ENCODE measurements at regions of chr2 and their contacts with region 1.

Region 1: GRCh38 chr2:45778720-45779171 is 127.3 kb downstream of the PRKCE start:
- DNase-seq: peak; percentile 63
- ATAC-seq: peak; percentile 72
- H3K4me3 ChIP-seq: no peak overlapping the region
- H3K27ac ChIP-seq: no peak overlapping the region
- H3K4me1 ChIP-seq: no peaks in the 10 kb centered on the region; the same call in 1 of the 2 replicates
- H3K27me3 ChIP-seq: no peaks in the 10 kb centered on the region
- CTCF ChIP-seq: peak; percentile 62
- POLR2A ChIP-seq: no peak
- RAD21 ChIP-seq: peak; percentile 78

Region 2: DNA sequence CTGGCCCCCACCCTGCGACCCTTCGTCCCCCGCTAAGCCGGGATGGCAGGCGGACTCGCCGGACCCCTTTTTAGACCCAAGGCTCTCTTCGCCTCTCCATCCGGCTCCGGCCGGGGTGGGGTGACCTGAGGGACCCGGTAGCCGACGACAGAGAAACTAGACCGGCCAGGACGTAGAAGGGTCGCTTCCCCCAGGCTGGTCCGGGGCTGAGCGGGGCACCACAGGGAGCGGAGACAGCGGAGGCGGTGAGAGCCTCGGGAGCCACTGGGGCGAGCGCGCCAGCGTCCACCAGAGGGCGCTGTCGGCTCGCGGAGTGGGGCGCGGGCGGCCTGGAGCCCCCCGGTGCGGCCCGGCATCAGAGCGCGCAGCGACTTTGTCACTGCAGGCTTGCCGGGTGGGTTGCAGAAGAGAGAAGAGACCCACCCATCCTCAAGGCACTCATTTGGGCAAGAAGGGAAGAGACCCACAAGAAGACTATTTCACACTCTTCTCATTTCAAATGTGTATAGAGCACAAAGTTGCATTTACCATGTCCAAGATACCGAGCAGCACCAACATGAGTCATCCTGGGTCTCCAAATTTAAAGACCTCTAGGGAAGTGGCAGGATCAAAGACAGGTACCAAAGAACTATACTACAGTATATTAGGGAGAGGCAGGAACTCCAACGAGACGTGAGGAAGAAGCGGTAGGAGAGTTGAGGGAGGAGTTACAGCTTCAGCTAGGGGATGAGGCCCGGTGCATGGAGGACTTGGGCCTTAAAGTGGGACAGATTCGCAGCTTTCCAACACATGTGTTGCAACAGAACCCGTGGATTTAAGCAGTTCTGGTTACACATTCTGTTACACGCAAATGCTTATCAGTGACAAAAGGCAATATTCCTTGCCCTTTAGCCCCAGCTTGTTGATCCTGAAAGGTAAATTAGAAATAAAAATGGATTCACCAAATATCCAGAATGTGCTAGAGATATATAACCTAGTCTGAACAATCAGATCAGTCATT is 134.9 kb before region 1 on chr2:
- CTCF ChIA-PET with region 1: no interaction called
- POLR2A ChIA-PET with region 1: no interaction called
- dilution Hi-C with region 1: no loop called
- in situ Hi-C with region 1: loop called (anchors 5 kb)
- intact Hi-C with region 1: loop called (anchors 1 kb)
- DNase-seq: peak; percentile 31
- ATAC-seq: peak; percentile 99
- H3K4me3 ChIP-seq: peak overlapping the region; percentile 67
- H3K27ac ChIP-seq: peak overlapping the region; percentile 50; the same call in 1 of the 2 replicates
- H3K4me1 ChIP-seq: peaks cover 2% of the 10 kb centered on the region; the same call in 1 of the 2 replicates
- H3K27me3 ChIP-seq: peaks cover 34% of the 10 kb centered on the region
- CTCF ChIP-seq: peak; percentile 97
- POLR2A ChIP-seq: 0 out of 2 replicates have a peak, but pooled peaks have one; percentile 42
- RAD21 ChIP-seq: peak; percentile 99

Measured in IMR-90 (cell line).